Activated T-helper 1 cell treated with anti-CD3 and anti-CD28 coated beads, Interleukin-12 subunit alpha, Interleukin-12 subunit beta, Interleukin-2, Interleukin-4 antibody, amounts not matched to agents 30 ng/mL and 10 ng/mL and 1 ng/mL, durations not matched to agents 14 hours and 24 hours and 36 hours (primary cell): ENCODE measurements at regions of chr13 and their contacts with region 1.

Region 1: DNA sequence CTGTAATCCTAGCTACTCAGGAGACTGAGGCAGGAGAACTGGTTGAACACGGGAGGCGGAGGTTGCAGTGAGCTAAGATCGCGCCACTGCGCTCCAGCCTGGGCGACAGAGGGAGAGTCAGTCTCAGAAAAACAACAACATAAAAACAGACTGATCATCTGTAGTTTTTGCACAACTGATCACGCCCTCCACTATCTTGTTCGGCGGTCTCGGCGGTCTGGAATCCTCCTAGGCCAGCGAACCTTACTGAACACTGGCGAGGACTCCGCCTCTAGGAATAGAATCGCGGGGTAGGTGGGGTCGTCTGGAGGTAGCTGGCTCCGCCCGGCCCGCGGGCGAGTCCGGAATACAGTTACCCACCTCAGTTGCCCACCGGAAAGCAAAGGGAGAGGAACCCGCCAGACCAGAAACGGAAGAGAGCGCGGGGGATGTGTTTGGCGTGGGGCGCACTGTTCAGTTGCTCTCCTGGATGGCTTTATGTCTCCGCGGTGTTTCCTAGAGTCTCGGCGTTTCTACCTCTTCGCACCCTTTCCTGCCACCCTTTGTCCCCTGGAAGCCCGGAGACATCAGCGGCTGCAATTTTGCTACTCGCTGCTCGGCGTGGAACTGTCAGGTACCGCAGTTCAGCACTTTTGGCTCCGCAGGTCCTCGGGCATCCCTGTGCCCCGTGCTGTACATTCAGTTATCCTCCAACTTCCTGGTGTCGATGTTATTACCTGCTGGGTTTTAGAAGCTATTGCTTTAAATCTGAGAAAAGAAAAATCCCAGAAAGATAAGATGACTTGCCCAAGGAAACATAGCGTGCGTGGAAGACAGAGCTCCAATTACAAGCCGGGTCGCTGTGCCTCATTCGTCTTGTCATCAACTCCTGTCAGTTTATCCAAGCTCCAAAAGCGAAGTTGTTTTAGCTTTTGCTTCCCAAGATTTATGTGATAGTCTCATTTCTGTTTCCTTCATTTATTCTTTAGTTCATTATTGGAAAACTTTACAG is 24.9 kb upstream of the HNRNPA1L2 start:
- DNase-seq: peak; percentile 80
- H3K4me3 Mint-ChIP-seq: peak overlapping the region; percentile 99
- H3K27ac Mint-ChIP-seq: peak overlapping the region; percentile 95
- H3K4me1 Mint-ChIP-seq: peaks cover 13% of the 10 kb centered on the region
- H3K27me3 Mint-ChIP-seq: no peaks in the 10 kb centered on the region

Region 2: GRCh38 chr13:52599848-52600603 is 17.3 kb before region 1 on chr13:
- intact Hi-C with region 1: loop called (anchors 1 kb)
- DNase-seq: no peak
- H3K4me3 Mint-ChIP-seq: peak overlapping the region; percentile 79
- H3K27ac Mint-ChIP-seq: no peak overlapping the region
- H3K4me1 Mint-ChIP-seq: peaks cover 10% of the 10 kb centered on the region
- H3K27me3 Mint-ChIP-seq: peaks cover 16% of the 10 kb centered on the region